Colonic mucosa (tissue), 4 donors: ENCODE measurements at regions of chr2 and their contacts with region 1.

Region 1: GRCh38 chr2:227774011-227774624 is 28.4 kb downstream of the SCYGR8 start:
- DNase-seq: no peak
- H3K4me3 ChIP-seq: no peak overlapping the region
- H3K27ac ChIP-seq: no peak overlapping the region
- H3K4me1 ChIP-seq: peaks cover 9% of the 10 kb centered on the region
- H3K27me3 ChIP-seq: no peaks in the 10 kb centered on the region
- CTCF ChIP-seq: peak; percentile 14

Region 2: GRCh38 chr2:227661019-227661649 is 113.0 kb before region 1 on chr2:
- intact Hi-C with region 1: no loop called
- DNase-seq: no peak
- H3K4me3 ChIP-seq: no peak overlapping the region
- H3K27ac ChIP-seq: no peak overlapping the region
- H3K4me1 ChIP-seq: no peaks in the 10 kb centered on the region
- H3K27me3 ChIP-seq: no peaks in the 10 kb centered on the region
- CTCF ChIP-seq: no peak

Region 3: DNA sequence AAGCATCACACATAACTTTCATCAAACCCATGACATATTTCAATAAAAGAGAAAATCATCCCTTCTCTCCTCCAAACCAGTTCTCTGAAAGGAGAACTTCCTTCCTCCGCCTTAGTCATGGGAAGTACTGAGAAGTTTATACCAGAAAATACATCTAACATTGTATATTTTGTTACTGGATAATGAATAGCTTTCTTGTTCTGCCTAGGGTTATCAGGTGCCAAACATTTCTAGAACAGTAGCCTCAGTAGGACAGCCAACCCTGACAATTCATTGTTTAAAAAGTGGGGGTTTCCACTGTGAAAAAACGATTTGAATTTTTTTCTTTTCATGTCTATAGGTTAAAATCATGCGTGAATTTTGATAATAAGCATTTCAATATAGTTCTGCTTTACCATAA is 81.3 kb after region 1 on chr2:
- intact Hi-C with region 1: loop called (anchors 5 kb)
- DNase-seq: no peak
- H3K4me3 ChIP-seq: no peak overlapping the region
- H3K27ac ChIP-seq: no peak overlapping the region
- H3K4me1 ChIP-seq: no peaks in the 10 kb centered on the region
- H3K27me3 ChIP-seq: no peaks in the 10 kb centered on the region
- CTCF ChIP-seq: no peak